HEK293 (cell line): ENCODE measurements at regions of chr7 and their contacts with region 1.

Region 1: DNA sequence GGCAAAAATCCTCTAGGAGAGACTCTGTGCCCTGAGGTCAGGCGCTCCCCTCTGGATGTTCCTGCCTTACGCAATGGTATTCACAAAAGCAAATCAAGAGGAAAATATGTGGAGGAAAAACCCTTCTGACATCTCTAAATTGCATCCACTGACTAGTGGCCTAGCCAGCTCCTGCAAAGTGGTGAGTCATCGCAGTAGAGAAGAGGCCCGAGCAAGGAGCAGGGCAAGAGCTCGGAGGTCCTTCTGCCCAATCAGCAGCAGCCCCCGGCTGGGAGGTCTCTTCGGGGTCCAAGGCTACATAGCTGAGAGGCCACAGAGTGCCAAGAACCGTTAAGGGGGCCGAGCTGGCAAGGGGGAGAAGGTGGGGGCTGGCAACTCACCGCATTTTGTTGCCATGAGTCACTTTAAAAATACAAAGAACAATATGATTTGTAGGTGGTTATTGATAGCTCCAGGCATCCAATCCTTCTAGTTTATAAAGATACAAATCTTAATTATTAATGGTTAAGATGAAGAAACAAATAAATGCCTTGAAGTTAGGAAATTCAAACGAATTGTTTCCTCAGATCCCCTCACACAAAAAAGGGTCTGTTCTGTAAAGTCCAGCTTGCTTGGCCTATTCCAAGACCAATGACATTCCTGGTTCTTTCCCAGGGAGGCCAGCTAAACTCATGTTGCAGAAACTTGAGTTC is 161.6 kb downstream of the PKD1L1 start:
- H3K4me3 ChIP-seq: no peak overlapping the region
- H3K27ac ChIP-seq: peak overlapping the region; percentile 50; the same call in 1 of the 2 replicates
- H3K4me1 ChIP-seq: peaks cover 14% of the 10 kb centered on the region
- CTCF ChIP-seq: no peak

Region 2: DNA sequence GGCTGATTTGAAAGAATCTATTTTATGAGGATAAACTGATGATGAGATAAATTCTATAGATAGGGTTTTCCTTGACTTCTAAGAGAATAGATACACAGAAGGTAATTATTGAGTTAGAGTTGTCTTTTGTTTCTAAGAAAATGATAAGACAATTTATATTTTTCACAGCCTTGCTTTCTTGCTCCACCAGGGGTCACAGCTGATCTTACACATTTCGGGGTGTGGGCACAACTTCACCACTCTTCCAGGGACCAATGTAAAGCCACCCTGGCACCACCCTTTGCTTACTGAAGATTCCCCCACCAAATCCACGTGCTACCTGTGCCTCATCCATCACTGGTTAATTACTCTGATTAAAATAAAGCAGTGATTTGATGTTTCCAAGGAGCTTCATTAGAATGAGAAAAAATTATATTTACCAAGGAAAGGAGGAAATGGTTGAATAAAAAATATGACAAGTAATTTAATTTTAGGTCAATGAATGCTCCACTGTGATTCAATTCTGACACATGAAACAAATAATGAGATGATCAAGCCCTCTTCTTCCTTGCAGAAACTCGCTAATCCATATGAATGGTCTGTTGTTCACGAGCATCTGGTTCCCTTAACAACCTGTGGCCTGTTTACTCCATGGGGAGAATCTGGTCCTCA is 27.5 kb before region 1 on chr7:
- CTCF ChIA-PET with region 1: interaction called, 11 read pairs
- POLR2A ChIA-PET with region 1: no interaction called
- H3K4me3 ChIP-seq: no peak overlapping the region
- H3K27ac ChIP-seq: no peak overlapping the region
- H3K4me1 ChIP-seq: peaks cover 3% of the 10 kb centered on the region
- CTCF ChIP-seq: no peak